ENCODE measurements at regions of chrX and their contacts with region 1.

Region 1: DNA sequence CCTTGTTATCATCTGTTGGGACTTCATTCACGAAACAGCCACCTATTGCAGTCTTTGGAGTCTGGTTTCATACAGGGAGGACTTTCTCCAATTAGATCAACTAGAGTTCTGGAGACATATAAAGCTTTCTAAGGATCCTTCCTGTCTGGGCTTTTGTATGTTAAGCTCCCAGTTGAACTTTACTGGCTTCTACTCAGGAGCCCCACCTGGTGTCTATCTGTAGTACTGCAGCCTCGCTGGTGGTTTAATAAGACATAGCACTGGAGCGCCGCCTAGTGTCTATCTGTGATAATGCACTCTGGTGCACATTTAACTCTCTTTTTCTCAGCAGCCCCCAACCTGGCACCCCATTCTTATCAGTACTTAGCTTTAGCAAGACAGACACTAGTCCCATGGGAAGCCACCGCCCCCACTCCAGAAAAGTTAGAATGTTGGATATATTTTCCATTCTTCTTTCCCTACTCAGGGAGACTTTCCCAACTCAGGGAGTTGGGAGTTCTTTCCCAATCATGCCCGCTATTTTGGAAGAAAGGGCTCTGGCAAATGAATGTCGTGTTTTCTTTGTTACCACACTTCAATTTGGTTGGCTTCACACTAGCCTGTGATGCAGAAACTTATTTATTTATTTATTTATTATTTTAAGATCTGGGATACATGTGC is 36.9 kb upstream of the SYTL4 start:
- DNase-seq: peak; percentile 87
- ATAC-seq: no peak
- H3K4me3 Mint-ChIP-seq: no peak overlapping the region
- H3K27ac Mint-ChIP-seq: no peak overlapping the region
- H3K4me1 Mint-ChIP-seq: no peaks in the 10 kb centered on the region
- H3K27me3 Mint-ChIP-seq: peaks cover 35% of the 10 kb centered on the region

Region 2: DNA sequence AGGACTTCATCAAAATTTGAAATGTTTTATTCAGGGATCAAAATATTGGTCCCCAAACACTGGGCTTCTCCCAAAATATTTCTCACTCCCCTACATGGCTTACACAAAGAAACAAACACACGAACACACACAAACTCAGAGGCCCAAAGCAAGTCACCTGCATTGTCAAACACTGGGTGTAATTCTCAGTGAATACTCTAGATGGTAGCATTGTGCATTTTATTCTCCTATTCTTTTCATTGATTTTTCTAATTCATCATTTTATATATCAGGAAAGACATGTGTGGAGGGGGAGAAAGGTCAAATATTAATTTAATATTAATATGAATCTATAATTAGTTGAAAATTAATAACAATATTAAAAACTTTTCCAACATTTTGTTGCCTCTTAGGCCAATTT is 256.3 kb before region 1 on chrX:
- CTCF ChIA-PET with region 1: interaction called, 10 read pairs
- DNase-seq: no peak
- ATAC-seq: no peak
- H3K4me3 Mint-ChIP-seq: no peak overlapping the region
- H3K27ac Mint-ChIP-seq: no peak overlapping the region
- H3K4me1 Mint-ChIP-seq: no peaks in the 10 kb centered on the region
- H3K27me3 Mint-ChIP-seq: peaks cover 5% of the 10 kb centered on the region

Region 3: DNA sequence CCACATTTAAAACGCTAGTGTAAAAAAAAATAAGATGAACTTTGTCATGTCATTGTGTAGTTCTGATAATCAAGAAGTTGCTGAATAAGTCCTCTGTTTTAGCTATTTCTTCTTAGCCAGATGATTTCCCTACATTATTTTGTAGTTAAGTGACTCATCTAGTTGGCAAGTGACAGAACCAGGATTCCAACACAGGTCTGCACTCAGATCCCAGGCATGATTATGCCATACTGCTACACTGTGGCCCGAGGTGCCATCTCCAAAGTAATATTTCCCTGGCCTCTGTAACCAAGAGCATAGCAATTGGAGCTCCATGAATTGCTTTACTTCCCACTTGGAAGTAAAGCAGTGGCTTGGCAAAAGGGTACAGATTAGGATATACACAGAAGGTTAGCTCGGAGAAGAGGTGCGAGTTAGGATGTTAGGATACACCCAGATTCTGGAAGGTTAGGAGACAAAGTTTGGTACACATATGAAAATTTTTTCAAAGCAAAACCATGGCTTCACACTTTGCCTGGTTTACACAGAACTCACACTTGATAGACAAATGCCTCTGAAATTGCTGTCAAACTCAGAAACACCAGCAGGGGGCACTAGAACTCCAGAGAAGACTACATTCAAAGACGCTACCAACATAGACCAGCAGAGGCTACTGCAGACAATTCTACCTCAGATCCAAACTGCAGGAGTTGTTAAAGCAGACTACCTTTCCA is 83.4 kb before region 1 on chrX:
- CTCF ChIA-PET with region 1: interaction called, 27 read pairs
- DNase-seq: peak; percentile 67
- ATAC-seq: peak; percentile 47
- H3K4me3 Mint-ChIP-seq: no peak overlapping the region
- H3K27ac Mint-ChIP-seq: no peak overlapping the region
- H3K4me1 Mint-ChIP-seq: peaks cover 8% of the 10 kb centered on the region
- H3K27me3 Mint-ChIP-seq: peaks cover 7% of the 10 kb centered on the region

Region 4: GRCh38 chrX:100928660-100929613 is 160.1 kb after region 1 on chrX and contains the start of gene XKRX:
- CTCF ChIA-PET with region 1: no interaction called
- DNase-seq: peak; percentile 56
- ATAC-seq: peak; percentile 76
- H3K4me3 Mint-ChIP-seq: peak within 1 kb of the TSS; percentile 73
- H3K27ac Mint-ChIP-seq: no peak within 1 kb of the TSS
- H3K4me1 Mint-ChIP-seq: peaks cover 22% of the 10 kb centered on the region
- H3K27me3 Mint-ChIP-seq: peaks cover 4% of the 10 kb centered on the region
- total RNA-seq, gene XKRX: 0.12 TPM in 1 of 2 experiments, not detected in the other